ENCODE measurements at regions of chr4 and their contacts with region 1.

Region 1: DNA sequence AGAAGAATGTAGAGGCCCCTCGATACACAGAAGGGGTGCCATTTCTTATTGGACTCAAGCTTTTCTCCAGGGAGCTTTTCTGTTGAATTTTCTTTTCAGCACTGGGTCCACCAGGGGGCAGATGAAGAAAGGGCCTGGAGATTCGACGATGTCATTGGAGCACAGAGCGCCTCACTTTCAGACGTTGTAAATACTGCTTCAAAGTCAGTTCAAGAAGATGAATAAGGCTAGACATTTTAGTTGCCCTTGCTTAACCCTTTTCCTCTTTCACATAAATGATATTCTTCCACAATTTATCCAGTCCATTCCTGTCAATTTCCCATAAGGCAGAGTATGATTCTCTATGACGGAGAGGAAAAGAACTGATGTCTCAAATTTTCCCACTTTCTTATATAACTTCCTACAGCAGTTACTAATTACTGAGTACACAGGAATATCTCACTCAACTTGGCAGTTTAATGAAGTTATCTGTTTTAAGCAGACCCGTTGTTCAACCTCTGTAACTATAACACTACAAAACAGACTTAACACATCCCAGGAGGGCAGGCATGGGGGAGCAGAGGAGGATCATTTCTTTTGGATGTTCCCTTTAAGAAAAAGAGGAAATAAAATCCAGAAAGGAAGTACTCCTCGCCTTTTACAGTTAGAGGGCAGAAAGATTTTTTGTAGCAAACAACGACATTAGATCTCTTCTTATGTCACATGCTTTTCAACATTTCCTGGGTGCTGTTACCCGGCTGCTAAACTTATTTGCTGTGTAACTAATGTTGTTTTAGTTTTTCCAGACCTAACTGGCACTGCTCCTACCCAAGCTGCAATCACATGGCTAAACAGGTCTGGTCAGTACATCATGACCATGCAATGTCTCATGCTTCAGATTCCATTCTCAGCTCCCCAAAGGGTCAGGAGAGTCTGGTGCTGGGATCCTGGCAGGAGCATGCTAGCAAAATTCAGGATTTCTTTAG is 12.2 kb upstream of the CENPU start:
- DNase-seq: peak; percentile 68
- ATAC-seq: peak; percentile 83

Region 2: GRCh38 chr4:184812651-184813181 is 66.6 kb after region 1 on chr4:
- intact Hi-C with region 1: loop called (anchors 5 kb)
- DNase-seq: no peak
- ATAC-seq: peak; percentile 0

Region 3: DNA sequence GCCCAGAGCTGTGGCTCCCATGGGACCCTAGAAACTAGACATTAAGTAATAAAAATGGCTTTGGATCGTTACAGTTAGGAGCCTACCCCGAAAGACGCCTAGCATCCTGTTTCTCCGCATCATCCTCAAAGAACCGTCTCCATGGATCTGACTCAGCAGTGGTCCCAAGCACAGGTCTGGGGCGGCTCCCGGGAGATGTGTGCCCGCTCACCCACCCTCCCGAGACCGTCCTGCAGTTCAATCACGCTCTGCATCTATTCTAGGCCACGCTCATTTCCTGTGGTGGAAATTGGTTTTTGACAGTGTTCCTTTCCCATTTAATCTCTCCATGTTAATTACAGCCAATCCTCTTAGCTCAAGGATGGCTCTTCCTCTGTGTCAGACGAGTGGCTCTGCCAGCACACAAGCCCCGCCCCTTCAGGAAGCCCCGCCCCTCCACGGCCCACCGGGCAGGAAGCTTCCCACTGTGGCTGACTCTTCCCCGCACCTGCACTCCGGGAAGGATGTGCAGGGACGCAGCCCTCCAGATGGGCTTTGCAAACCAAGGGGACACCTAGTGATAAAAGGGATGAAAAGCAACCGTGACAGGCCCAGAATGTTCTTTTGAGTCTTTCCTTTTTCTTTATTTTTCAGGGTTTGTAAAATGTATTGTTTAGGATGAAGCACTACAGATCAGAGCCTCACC is 237.7 kb after region 1 on chr4:
- intact Hi-C with region 1: loop called (anchors 10 kb)
- DNase-seq: peak; percentile 75
- ATAC-seq: peak; percentile 80